Calu3 (cell line): ENCODE measurements at regions of chr10 and their contacts with region 1.

Region 1: GRCh38 chr10:24344279-24344678 is 135.3 kb downstream of the KIAA1217 start:
- DNase-seq: peak; percentile 34
- H3K4me3 Mint-ChIP-seq: peak overlapping the region; percentile 46
- H3K27ac Mint-ChIP-seq: peak overlapping the region; percentile 76
- H3K4me1 Mint-ChIP-seq: peaks cover 26% of the 10 kb centered on the region
- H3K27me3 Mint-ChIP-seq: no peaks in the 10 kb centered on the region
- CTCF ChIP-seq: no peak

Region 2: GRCh38 chr10:23198940-23199767 is 1145.1 kb before region 1 on chr10:
- CTCF ChIA-PET with region 1: no interaction called
- intact Hi-C with region 1: no loop called
- DNase-seq: no peak
- H3K4me3 Mint-ChIP-seq: no peak overlapping the region
- H3K27ac Mint-ChIP-seq: no peak overlapping the region
- H3K4me1 Mint-ChIP-seq: no peaks in the 10 kb centered on the region
- H3K27me3 Mint-ChIP-seq: peaks cover 89% of the 10 kb centered on the region
- CTCF ChIP-seq: no peak

Region 3: DNA sequence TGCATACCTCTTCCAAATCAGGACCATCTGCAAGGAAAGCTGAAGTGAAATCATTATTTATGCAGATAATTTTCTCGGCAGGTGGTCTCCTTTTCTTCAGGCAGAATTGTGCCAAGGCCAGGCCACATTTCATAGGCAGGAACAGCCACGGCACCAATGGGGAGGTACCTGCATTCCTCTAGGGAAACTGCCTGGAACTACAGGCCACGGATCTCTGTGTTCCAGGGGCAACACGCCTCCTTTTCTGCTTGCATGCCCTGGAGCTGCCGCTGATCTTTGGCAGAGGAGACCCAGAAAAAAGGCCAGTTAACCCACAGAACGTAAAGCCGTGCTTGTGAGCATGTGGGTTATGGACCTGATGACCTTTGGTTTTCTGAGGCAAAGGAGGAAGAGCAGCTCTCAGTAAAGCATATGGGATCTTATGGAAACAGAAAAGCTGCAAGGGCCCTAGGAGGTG is 246.5 kb before region 1 on chr10:
- CTCF ChIA-PET with region 1: no interaction called
- intact Hi-C with region 1: no loop called
- DNase-seq: no peak
- H3K4me3 Mint-ChIP-seq: no peak overlapping the region
- H3K27ac Mint-ChIP-seq: no peak overlapping the region
- H3K4me1 Mint-ChIP-seq: no peaks in the 10 kb centered on the region
- H3K27me3 Mint-ChIP-seq: peaks cover 6% of the 10 kb centered on the region
- CTCF ChIP-seq: no peak

Region 4: DNA sequence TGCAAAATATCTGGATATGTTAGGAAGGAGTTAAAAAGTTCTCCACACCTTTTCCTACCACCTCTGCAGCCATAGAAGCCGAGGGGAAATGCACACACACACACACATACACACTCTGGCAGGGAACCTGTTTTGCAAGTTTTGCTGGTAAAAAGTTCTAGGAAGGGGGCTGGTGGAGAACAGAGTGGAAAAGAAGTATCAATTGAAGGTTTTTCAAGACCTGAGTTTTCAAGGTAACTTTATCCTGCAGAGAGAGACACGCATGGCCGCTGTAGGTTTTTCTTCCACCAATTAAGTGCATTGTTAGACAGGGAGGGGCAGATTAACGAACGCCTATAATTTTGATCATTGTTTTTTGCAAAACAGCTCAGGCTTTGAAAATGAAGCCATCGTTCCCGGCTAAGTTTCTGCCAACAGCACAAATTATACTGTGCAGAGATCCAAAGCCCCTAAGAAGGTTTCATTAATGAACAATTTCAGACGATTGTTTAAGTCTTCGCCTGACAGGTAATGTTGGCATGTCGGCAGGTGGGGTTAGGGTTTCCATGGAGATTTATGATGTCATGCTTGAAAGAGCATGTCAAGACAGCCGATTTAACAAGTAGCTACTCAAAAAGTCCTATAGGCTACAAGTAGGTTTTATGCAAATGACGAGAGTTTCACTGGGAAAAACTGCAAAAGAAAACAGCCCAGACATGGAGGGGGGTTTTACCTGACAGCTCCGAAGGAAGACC is 105.6 kb before region 1 on chr10:
- CTCF ChIA-PET with region 1: no interaction called
- intact Hi-C with region 1: loop called (anchors 5 kb)
- DNase-seq: peak; percentile 74
- H3K4me3 Mint-ChIP-seq: peak overlapping the region; percentile 74
- H3K27ac Mint-ChIP-seq: peak overlapping the region; percentile 92
- H3K4me1 Mint-ChIP-seq: peaks cover 24% of the 10 kb centered on the region
- H3K27me3 Mint-ChIP-seq: no peaks in the 10 kb centered on the region
- CTCF ChIP-seq: no peak

Region 5: DNA sequence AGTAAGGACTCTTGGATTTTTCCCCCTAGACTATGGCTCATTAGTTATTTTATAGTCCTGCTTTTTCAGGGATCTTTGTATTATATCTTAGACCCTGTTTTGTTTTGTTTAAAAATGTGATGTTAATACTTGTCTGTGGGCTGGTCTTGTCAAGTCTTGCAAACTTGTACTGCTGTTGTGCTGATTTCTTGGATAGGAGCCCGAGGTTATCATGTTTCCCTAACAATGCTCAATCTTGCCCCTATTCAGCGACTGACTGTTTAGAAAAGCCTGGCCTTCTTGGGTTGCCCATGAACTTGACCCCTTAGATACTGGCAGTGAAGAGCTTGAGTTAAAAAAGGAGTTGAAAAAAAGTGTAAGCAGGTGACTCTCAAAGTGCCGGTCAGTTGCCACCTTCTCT is 19.6 kb before region 1 on chr10:
- CTCF ChIA-PET with region 1: no interaction called
- intact Hi-C with region 1: no loop called
- DNase-seq: no peak
- H3K4me3 Mint-ChIP-seq: no peak overlapping the region
- H3K27ac Mint-ChIP-seq: no peak overlapping the region
- H3K4me1 Mint-ChIP-seq: peaks cover 9% of the 10 kb centered on the region
- H3K27me3 Mint-ChIP-seq: no peaks in the 10 kb centered on the region
- CTCF ChIP-seq: no peak